A549 (cell line): ENCODE measurements at regions of chrX and their contacts with region 1.

Region 1: GRCh38 chrX:43939187-43939926 is 33.8 kb downstream of the NDP start:
- DNase-seq: peak in 1 of 2 experiments; percentile 13
- ATAC-seq: no peak
- H3K4me3 ChIP-seq: no peak overlapping the region
- H3K27ac ChIP-seq: no peak overlapping the region
- H3K4me1 ChIP-seq: no peaks in the 10 kb centered on the region
- CTCF ChIP-seq: peak; percentile 17; the same call in 1 of the 3 replicates
- EP300 ChIP-seq: no peak
- POLR2A ChIP-seq: no peak
- RAD21 ChIP-seq: peak in 1 of 2 experiments; percentile 20; a peak in 2 of 5 replicates

Region 2: DNA sequence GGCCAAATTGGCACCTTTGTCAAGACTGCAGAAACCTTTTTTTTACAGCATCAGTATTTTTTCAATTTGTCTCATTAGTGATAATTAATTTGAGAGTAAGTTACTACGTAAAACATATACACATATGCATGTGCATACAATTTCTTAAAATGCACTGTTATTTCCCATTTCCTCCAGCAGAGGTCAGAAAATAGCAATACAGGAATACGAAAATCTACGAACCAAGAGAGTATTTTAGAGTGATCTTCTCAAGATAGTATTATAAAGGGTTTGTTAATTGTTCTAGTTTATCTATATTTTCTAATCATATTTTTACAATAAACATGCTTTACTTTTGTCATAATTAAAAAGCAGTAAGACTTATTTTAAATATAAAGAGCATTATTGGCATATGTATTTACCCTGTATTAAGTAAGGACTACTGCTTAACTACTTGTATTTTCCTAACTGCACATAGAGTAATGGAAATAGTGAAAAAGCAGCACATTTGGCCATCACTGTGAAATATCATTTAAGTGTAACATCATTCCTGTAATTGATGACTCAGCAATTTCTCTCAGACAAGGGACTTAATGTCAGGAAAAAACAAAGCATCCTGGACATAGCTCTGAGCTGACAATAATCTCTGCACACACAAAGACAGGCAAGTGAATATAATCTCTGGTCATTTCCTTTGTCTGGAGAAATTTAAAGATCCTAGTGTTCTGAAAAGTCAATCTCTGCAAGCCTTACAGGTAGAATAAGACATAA is 102.7 kb before region 1 on chrX:
- CTCF ChIA-PET with region 1: interaction called, 30 read pairs
- POLR2A ChIA-PET with region 1: no interaction called
- DNase-seq: peak; percentile 18 to 24
- ATAC-seq: 0 out of 6 replicates have a peak, but pooled peaks of 1 of the 2 experiments have one; percentile 42
- H3K4me3 ChIP-seq: no peak overlapping the region
- H3K27ac ChIP-seq: no peak overlapping the region
- H3K4me1 ChIP-seq: 0 out of 3 replicates have a peak, but pooled peaks cover 3% of the 10 kb centered on the region
- CTCF ChIP-seq: peak; percentile 58
- EP300 ChIP-seq: no peak
- POLR2A ChIP-seq: no peak
- RAD21 ChIP-seq: peak; percentile 66 to 67

Region 3: GRCh38 chrX:43910012-43910411 is 29.3 kb before region 1 on chrX:
- CTCF ChIA-PET with region 1: no interaction called
- POLR2A ChIA-PET with region 1: no interaction called
- DNase-seq: peak in 1 of 2 experiments; percentile 5
- ATAC-seq: no peak
- H3K4me3 ChIP-seq: no peak overlapping the region
- H3K27ac ChIP-seq: no peak overlapping the region
- H3K4me1 ChIP-seq: no peaks in the 10 kb centered on the region
- CTCF ChIP-seq: no peak
- EP300 ChIP-seq: no peak
- POLR2A ChIP-seq: no peak
- RAD21 ChIP-seq: no peak

Region 4: GRCh38 chrX:43949669-43950068 is 10.3 kb after region 1 on chrX:
- CTCF ChIA-PET with region 1: interaction called, 13 read pairs
- POLR2A ChIA-PET with region 1: no interaction called
- DNase-seq: peak; percentile 40 to 48
- ATAC-seq: peak; percentile 90 to 93
- H3K4me3 ChIP-seq: no peak overlapping the region
- H3K27ac ChIP-seq: no peak overlapping the region
- H3K4me1 ChIP-seq: no peaks in the 10 kb centered on the region
- CTCF ChIP-seq: peak; percentile 44
- EP300 ChIP-seq: no peak
- POLR2A ChIP-seq: no peak
- RAD21 ChIP-seq: peak; percentile 23 to 38; a peak in 1 of 5 replicates

Region 5: GRCh38 chrX:44082829-44083228 is 143.5 kb after region 1 on chrX:
- CTCF ChIA-PET with region 1: no interaction called
- POLR2A ChIA-PET with region 1: no interaction called
- DNase-seq: no peak
- ATAC-seq: no peak
- H3K4me3 ChIP-seq: no peak overlapping the region
- H3K27ac ChIP-seq: no peak overlapping the region
- H3K4me1 ChIP-seq: no peaks in the 10 kb centered on the region
- CTCF ChIP-seq: no peak
- EP300 ChIP-seq: no peak
- POLR2A ChIP-seq: no peak
- RAD21 ChIP-seq: no peak